Endothelial cell of umbilical vein (primary cell): ENCODE measurements at regions of chr6 and their contacts with region 1.

Region 1: DNA sequence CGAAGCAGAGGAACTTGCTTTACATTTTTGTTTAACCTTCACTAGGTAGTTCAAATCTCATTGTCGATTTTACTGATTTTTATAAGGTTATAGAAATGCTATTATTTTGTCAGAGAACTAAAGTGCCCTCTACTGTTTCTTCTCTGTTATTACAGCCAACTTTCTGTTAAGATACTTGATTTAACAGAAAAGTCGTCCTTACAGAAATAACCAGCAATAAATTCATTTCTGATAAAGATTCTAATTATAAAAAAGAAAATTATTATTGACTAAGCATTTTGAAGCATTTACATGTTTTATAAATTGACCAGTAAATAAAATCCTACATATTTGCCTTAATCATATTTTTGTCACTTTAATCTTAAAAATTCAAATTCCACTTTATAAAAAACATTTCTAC is 60.8 kb downstream of the OGFRL1 start:
- DNase-seq: peak; percentile 53
- H3K4me3 ChIP-seq: no peak overlapping the region
- H3K27ac ChIP-seq: no peak overlapping the region
- H3K4me1 ChIP-seq: no peaks in the 10 kb centered on the region
- H3K27me3 ChIP-seq: no peaks in the 10 kb centered on the region
- CTCF ChIP-seq: peak; percentile 37 to 41
- POLR2A ChIP-seq: no peak

Region 2: DNA sequence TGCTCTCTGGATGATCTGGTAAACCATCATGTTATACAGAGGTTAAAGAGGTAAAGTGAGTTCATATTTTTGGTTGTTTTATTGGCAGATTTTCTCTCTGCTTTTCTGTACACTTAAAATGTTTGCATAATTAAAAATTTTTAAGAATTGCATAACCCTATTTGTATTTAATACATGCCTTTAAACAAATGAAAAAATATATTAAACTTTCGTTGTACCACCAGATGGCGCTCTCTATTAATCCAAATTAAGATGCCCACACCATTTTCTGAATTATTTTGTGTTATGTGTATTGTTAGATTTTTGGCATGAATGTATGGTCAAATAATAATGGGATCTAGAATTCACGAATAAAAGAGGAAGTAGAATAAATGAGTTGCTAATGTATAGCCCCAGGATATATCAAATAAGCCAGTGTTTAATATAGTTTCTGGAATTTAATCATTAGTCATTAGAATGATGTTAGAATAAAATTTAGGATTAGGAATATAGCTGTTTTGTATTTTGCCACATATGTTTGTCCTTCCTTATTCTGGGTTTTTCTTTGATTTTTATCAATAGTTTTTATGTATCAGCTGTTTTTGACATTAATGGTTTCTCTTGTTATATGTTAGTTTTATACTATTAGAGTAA is 642.8 kb before region 1 on chr6:
- CTCF ChIA-PET with region 1: no interaction called
- POLR2A ChIA-PET with region 1: no interaction called
- dilution Hi-C with region 1: no loop called
- intact Hi-C with region 1: loop called (anchors 10 kb)
- DNase-seq: peak; percentile 60
- H3K4me3 ChIP-seq: no peak overlapping the region
- H3K27ac ChIP-seq: no peak overlapping the region
- H3K4me1 ChIP-seq: peaks cover 10% of the 10 kb centered on the region
- H3K27me3 ChIP-seq: no peaks in the 10 kb centered on the region
- CTCF ChIP-seq: peak; percentile 23 to 30
- POLR2A ChIP-seq: no peak

Region 3: GRCh38 chr6:71012866-71013469 is 336.4 kb before region 1 on chr6:
- CTCF ChIA-PET with region 1: no interaction called
- POLR2A ChIA-PET with region 1: no interaction called
- dilution Hi-C with region 1: no loop called
- intact Hi-C with region 1: loop called (anchors 5 kb)
- DNase-seq: peak; percentile 39
- H3K4me3 ChIP-seq: no peak overlapping the region
- H3K27ac ChIP-seq: no peak overlapping the region
- H3K4me1 ChIP-seq: no peaks in the 10 kb centered on the region
- H3K27me3 ChIP-seq: no peaks in the 10 kb centered on the region
- CTCF ChIP-seq: peak; percentile 69 to 71
- POLR2A ChIP-seq: no peak

Region 4: GRCh38 chr6:71288228-71289001 is 61.0 kb before region 1 on chr6 and contains the start of gene OGFRL1:
- CTCF ChIA-PET with region 1: interaction called, 13 read pairs
- POLR2A ChIA-PET with region 1: no interaction called
- dilution Hi-C with region 1: no loop called
- intact Hi-C with region 1: loop called (anchors 1 kb)
- DNase-seq: peak; percentile 56
- H3K4me3 ChIP-seq: peak within 1 kb of the TSS; percentile 71 to 79 (median 75)
- H3K27ac ChIP-seq: peak within 1 kb of the TSS; percentile 60
- H3K4me1 ChIP-seq: peaks cover 28% of the 10 kb centered on the region
- H3K27me3 ChIP-seq: no peaks in the 10 kb centered on the region
- CTCF ChIP-seq: peak in 1 of 2 donors; percentile 5
- POLR2A ChIP-seq: peak; percentile 89
- total RNA-seq, gene OGFRL1: 19.4 and 21.1 TPM in 2 replicates

Region 5: GRCh38 chr6:71496018-71496721 is 146.8 kb after region 1 on chr6:
- CTCF ChIA-PET with region 1: no interaction called
- POLR2A ChIA-PET with region 1: no interaction called
- dilution Hi-C with region 1: no loop called
- intact Hi-C with region 1: no loop called
- DNase-seq: peak; percentile 67
- H3K4me3 ChIP-seq: peak overlapping the region in 2 of 3 experiments; percentile 61 to 74
- H3K27ac ChIP-seq: peak overlapping the region; percentile 66
- H3K4me1 ChIP-seq: peaks cover 17% of the 10 kb centered on the region
- H3K27me3 ChIP-seq: no peaks in the 10 kb centered on the region
- CTCF ChIP-seq: no peak
- POLR2A ChIP-seq: no peak

Region 6: DNA sequence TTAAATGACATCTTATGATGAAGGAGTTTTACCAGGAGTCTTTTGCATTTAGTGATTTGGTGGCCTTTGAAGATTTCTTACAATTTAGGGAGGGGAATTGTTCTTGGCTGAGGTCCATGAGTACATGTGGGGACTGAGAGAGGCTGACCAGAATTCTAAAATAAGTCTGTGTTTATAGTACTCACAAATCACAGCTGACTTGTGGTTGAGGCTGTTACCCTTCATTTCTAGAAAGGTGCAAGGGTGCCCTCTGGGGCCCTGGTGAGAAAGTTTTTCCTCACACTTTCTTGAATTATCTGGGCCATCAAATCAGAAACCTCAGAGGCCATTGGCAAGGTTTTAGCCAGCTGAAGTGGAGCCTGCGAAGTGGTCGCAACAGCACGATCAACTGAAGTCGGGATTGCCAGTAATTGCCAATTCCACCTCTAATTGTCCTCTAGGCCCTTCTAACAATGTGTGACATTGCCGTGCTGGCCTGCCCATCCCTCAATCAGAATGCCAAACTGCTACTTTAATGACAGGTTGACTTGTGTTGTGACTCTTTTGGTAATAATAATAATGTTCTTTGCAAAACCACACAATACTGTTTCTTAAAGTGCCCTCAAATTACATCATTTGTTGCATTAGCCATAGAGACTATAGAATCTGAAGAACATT is 160.8 kb after region 1 on chr6:
- CTCF ChIA-PET with region 1: interaction called, 17 read pairs
- POLR2A ChIA-PET with region 1: no interaction called
- dilution Hi-C with region 1: no loop called
- intact Hi-C with region 1: no loop called
- DNase-seq: peak; percentile 79
- H3K4me3 ChIP-seq: no peak overlapping the region
- H3K27ac ChIP-seq: no peak overlapping the region
- H3K4me1 ChIP-seq: peaks cover 7% of the 10 kb centered on the region
- H3K27me3 ChIP-seq: no peaks in the 10 kb centered on the region
- CTCF ChIP-seq: peak; percentile 57 to 59
- POLR2A ChIP-seq: no peak

Region 7: DNA sequence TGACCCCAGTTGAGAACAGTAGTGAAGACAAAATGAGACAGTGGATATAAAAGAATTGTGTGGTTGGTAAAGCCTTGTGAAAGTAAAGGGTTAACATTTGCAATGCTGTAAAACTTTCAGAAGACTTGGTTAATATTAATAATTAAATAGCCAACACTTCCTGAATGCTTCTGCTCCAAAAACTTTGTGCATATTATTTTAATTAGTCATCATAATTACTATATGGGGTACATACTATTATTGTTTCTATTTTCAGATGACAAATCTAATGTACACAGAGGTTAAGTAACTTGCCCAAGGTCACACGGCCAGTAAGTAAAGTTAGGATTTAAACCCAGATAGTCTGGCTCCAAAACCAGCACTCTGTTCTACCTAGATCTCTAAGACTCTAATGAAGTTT is 230.5 kb after region 1 on chr6:
- CTCF ChIA-PET with region 1: no interaction called
- POLR2A ChIA-PET with region 1: no interaction called
- dilution Hi-C with region 1: no loop called
- intact Hi-C with region 1: no loop called
- DNase-seq: peak; percentile 6
- H3K4me3 ChIP-seq: no peak overlapping the region
- H3K27ac ChIP-seq: no peak overlapping the region
- H3K4me1 ChIP-seq: peaks cover 7% of the 10 kb centered on the region
- H3K27me3 ChIP-seq: peaks cover 0 to 3% of the 10 kb centered on the region in 2 experiments
- CTCF ChIP-seq: no peak
- POLR2A ChIP-seq: no peak